ENCODE measurements at regions of chr10 and their contacts with region 1.

Region 1: DNA sequence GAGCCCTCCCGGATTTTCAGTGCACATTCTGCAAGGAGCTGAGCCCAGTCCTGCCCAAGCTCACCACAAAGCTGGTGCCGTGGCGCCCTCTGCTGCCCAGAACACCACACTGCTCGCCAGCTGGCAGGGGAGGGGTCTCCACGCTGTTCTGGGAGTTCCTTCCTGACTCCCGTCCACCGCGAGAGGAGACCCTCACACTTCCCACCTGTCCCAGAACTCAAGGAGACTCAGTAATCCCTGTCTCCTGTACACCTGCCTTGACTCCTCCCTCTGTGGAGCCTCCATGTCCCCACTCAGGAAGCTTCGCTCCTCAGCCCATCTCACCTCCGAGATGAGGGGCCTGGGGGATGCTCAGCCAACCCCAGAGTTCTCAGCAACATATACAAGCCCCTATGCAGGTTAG is 11.3 kb downstream of the C10orf105 start:
- DNase-seq: peak; percentile 32 to 81 (median 59)
- ATAC-seq: peak; percentile 42 to 65
- H3K4me3 Mint-ChIP-seq: no peak overlapping the region
- H3K27ac Mint-ChIP-seq: peak overlapping the region in 5 of 10 donors; percentile 33 to 78 (median 67)
- H3K4me1 Mint-ChIP-seq: peaks cover 26 to 62% (median 47%) of the 10 kb centered on the region in 4 donors
- H3K27me3 Mint-ChIP-seq: no peaks in the 10 kb centered on the region

Region 2: DNA sequence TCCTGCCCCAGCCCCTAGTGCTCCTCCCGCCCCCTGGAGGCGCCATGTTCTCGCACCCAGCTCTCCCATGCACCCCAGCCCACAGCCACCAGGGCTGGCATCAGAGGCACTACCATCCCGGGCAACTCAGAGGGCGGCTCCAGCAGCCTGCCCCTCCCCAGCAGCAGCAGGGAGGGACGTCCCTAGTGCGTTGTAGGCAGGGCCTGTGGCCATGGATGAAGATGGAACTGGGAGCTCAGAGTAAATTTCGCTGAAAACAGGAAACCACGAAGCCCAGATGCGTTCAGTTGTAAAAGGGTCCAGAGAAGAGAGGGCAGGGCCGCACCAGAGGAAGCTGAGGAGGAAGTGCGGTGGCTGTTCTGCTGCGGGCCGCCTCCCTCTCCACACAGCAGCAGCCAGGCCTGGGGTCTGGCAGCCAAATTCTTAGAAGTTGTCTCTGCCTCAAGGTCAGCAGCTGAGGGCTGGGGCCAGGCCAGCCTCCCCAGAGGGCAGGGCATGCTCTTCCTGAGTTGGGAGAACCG is 40.4 kb after region 1 on chr10:
- POLR2A ChIA-PET with region 1: interaction called, 71 read pairs
- DNase-seq: peak; percentile 59 to 91 (median 81)
- ATAC-seq: peak; percentile 78 to 85
- H3K4me3 Mint-ChIP-seq: peak overlapping the region; percentile 66 to 95 (median 85)
- H3K27ac Mint-ChIP-seq: peak overlapping the region; percentile 95 to 100 (median 98)
- H3K4me1 Mint-ChIP-seq: peaks cover 56 to 100% (median 98%) of the 10 kb centered on the region in 4 donors
- H3K27me3 Mint-ChIP-seq: no peaks in the 10 kb centered on the region

Region 3: DNA sequence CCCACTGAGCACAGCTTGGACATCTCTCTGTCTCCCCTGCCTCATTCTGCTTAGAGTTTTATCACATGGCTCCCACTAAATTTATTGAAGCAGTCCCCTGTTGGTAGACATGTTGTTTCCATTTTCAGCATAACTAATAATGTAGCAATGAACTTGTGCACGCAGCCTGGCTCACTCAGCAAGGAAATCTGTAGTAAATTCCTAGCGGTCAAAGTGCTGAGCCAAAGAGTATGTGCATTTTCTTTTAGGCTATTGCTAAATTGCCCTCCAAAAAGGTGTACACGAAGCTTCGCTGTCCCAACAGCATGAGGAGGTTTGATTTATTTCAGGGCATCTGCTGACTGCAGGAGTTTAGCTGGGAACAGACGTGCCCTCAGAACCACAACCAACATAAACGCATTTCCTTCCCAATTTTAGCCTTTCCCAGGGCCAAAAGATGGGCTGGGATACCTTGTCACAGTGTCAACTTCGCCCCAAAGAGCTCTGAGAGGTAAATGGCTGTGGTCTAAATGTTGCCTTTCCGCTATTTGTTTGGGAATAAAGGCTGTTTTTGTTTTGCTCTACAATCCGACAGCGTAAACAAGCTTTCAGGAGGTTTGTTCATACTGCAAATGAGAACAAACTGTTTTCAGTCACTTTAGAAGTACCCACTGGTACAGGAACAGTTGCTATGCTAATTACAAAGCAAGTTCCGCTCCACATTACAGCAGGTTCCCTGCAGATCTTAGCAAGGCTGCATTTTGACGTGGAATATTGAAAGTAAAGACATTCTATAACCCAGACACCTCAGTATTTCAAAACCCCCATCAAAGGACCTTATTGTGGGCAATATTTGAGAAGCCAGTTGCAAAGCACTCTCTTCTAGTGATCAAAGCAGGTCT is 48.2 kb after region 1 on chr10:
- POLR2A ChIA-PET with region 1: interaction called, 34 read pairs
- DNase-seq: peak in 7 of 10 donors; percentile 30 to 87 (median 65)
- ATAC-seq: peak; percentile 72 to 91
- H3K4me3 Mint-ChIP-seq: peak overlapping the region; percentile 61 to 86 (median 80)
- H3K27ac Mint-ChIP-seq: peak overlapping the region; percentile 90 to 99 (median 97)
- H3K4me1 Mint-ChIP-seq: peaks cover 48 to 94% (median 90%) of the 10 kb centered on the region in 4 donors
- H3K27me3 Mint-ChIP-seq: no peaks in the 10 kb centered on the region

Region 4: GRCh38 chr10:71888623-71889387 is 180.5 kb after region 1 on chr10:
- POLR2A ChIA-PET with region 1: no interaction called
- DNase-seq: peak; percentile 9 to 74 (median 36)
- ATAC-seq: peak; percentile 96 to 97
- H3K4me3 Mint-ChIP-seq: peak overlapping the region; percentile 76 to 96 (median 90)
- H3K27ac Mint-ChIP-seq: peak overlapping the region in 6 of 10 donors; percentile 18 to 88 (median 75)
- H3K4me1 Mint-ChIP-seq: peaks cover 11 to 32% (median 11%) of the 10 kb centered on the region in 4 donors
- H3K27me3 Mint-ChIP-seq: peaks cover 0 to 8% (median 2%) of the 10 kb centered on the region in 5 donors

Measured in naive thymus-derived CD8-positive, alpha-beta T cell (primary cell).